Naive thymus-derived CD4-positive, alpha-beta T cell (primary cell): ENCODE measurements at regions of chr12 and their contacts with region 1.

Region 1: GRCh38 chr12:95494888-95495287 is 20.9 kb downstream of the METAP2 start:
- DNase-seq: no peak
- ATAC-seq: no peak
- H3K4me3 ChIP-seq: no peak overlapping the region
- H3K4me3 Mint-ChIP-seq: no peak overlapping the region
- H3K27ac ChIP-seq: no peak overlapping the region
- H3K27ac Mint-ChIP-seq: peak overlapping the region in 2 of 9 donors; percentile 18 to 67
- H3K4me1 ChIP-seq: no peaks in the 10 kb centered on the region
- H3K4me1 Mint-ChIP-seq: peaks cover 0 to 28% (median 11%) of the 10 kb centered on the region in 7 donors
- H3K27me3 ChIP-seq: no peaks in the 10 kb centered on the region
- H3K27me3 Mint-ChIP-seq: no peaks in the 10 kb centered on the region

Region 2: DNA sequence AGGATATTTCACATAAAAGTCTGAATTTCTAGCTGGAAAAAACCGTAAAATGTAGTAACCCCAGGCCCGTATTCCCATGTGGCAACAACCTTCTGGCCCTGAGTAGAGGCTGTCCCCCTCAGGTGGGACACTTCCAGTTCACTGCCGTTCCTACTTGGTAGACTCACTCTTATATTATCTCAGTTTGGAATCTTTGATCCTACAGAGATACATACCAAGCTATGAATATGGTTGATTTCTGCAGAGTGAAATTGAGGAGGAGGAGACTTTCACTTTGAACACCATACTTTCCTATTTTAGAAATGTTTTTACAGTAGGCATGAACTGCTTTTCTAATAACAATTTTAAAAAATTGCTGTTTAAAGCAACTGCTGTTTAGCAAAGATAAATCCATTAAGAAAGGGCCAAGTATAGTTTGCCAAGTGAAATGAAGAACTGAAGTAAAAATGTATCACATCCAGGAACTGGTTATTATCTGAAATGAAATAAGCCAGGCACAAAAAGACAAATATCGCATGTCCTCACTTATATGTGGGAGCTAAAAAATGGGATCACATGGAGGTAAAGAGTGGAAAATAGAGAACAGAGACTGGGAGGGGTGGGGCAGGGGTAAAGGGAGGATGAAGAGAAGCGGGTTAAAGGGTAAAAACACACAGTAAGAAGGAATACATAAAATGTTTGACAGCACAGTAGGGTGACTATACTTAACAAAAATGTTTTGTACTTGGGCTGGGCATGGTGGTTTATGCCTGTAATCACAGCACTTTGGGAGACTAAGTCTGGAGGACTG is 113.7 kb before region 1 on chr12:
- CTCF ChIA-PET with region 1: no interaction called
- POLR2A ChIA-PET with region 1: no interaction called
- intact Hi-C with region 1: no loop called
- DNase-seq: no peak
- ATAC-seq: no peak
- H3K4me3 ChIP-seq: no peak overlapping the region
- H3K4me3 Mint-ChIP-seq: no peak overlapping the region
- H3K27ac ChIP-seq: no peak overlapping the region
- H3K27ac Mint-ChIP-seq: no peak overlapping the region
- H3K4me1 ChIP-seq: no peaks in the 10 kb centered on the region
- H3K4me1 Mint-ChIP-seq: no peaks in the 10 kb centered on the region
- H3K27me3 ChIP-seq: no peaks in the 10 kb centered on the region
- H3K27me3 Mint-ChIP-seq: peaks cover 0 to 2% (median 0%) of the 10 kb centered on the region in 5 donors

Region 3: DNA sequence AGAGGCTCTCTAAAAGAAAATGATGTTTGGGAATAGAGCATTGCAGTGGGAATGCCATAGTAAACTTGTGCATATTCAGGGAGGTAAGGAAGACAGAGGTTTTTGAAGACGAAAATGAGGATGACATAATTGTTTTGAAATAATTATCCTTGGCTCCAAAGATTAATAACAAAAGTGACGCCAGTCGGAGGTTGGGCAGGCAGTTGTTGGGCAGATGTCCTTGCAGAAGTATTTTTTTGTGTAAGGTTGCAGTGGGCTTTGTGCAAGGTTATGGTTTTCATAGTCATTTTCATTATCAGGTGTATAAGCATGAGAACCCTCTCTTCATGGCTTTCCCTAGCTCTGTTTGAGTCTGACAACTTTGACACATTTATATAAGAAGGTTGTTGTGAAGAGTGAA is 14.4 kb after region 1 on chr12:
- CTCF ChIA-PET with region 1: interaction called, 4 read pairs
- POLR2A ChIA-PET with region 1: no interaction called
- intact Hi-C with region 1: loop called in 1 of 2 experiments (anchors 2 kb)
- DNase-seq: no peak
- ATAC-seq: no peak
- H3K4me3 ChIP-seq: no peak overlapping the region
- H3K4me3 Mint-ChIP-seq: no peak overlapping the region
- H3K27ac ChIP-seq: no peak overlapping the region
- H3K27ac Mint-ChIP-seq: peak overlapping the region in 5 of 9 donors; percentile 5 to 55 (median 37)
- H3K4me1 ChIP-seq: no peaks in the 10 kb centered on the region
- H3K4me1 Mint-ChIP-seq: peaks cover 0 to 14% (median 6%) of the 10 kb centered on the region in 7 donors
- H3K27me3 ChIP-seq: no peaks in the 10 kb centered on the region
- H3K27me3 Mint-ChIP-seq: no peaks in the 10 kb centered on the region

Region 4: DNA sequence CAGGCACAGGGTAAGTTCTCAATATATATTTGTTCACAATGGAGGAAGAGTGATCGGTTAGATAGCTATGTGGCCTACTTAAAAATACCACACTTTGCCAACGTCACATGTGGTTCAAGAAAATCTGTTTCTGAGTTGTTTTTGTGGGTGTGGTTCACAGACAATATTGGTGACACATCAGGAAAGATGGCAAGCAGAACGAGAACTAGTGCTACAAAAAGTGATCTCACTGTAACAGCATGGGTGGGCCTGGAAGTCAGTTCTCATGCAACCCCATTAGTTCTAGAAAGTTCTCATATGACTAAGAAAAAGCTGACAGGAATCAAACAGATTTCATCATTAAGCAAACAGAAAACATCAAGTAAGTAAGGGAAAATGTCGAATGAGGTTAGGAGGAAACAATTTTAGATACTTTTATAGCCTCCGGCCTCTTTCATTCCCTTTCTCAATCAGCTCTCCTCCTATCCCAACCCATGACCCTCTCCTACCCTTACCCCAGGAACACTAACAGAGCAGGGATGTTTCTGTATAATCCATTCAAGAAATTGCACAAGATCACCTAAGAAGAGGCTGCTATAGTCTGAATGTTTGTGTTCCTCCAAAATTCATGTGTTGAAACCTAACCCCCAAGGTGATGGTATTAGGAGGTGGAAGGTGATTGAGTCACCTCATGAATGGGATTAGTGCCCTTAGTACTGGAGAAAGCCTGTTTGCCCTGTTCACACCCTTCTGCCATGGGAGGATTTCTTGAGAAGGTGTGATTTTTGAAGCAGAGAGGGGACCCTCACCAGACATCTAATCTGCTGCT is 311.2 kb after region 1 on chr12:
- CTCF ChIA-PET with region 1: no interaction called
- POLR2A ChIA-PET with region 1: no interaction called
- intact Hi-C with region 1: no loop called
- DNase-seq: no peak
- ATAC-seq: peak; percentile 72
- H3K4me3 ChIP-seq: no peak overlapping the region
- H3K4me3 Mint-ChIP-seq: no peak overlapping the region
- H3K27ac ChIP-seq: no peak overlapping the region
- H3K27ac Mint-ChIP-seq: no peak overlapping the region
- H3K4me1 ChIP-seq: no peaks in the 10 kb centered on the region
- H3K4me1 Mint-ChIP-seq: no peaks in the 10 kb centered on the region
- H3K27me3 ChIP-seq: no peaks in the 10 kb centered on the region
- H3K27me3 Mint-ChIP-seq: peaks cover 17 to 32% (median 27%) of the 10 kb centered on the region in 5 donors

Region 5: GRCh38 chr12:95963096-95963495 is 468.2 kb after region 1 on chr12:
- CTCF ChIA-PET with region 1: no interaction called
- POLR2A ChIA-PET with region 1: no interaction called
- intact Hi-C with region 1: no loop called
- DNase-seq: no peak
- ATAC-seq: no peak
- H3K4me3 ChIP-seq: no peak overlapping the region
- H3K4me3 Mint-ChIP-seq: no peak overlapping the region
- H3K27ac ChIP-seq: no peak overlapping the region
- H3K27ac Mint-ChIP-seq: no peak overlapping the region
- H3K4me1 ChIP-seq: no peaks in the 10 kb centered on the region
- H3K4me1 Mint-ChIP-seq: peaks cover 0 to 1% (median 0%) of the 10 kb centered on the region in 7 donors
- H3K27me3 ChIP-seq: no peaks in the 10 kb centered on the region
- H3K27me3 Mint-ChIP-seq: peaks cover 0 to 2% (median 0%) of the 10 kb centered on the region in 5 donors